Naive thymus-derived CD4-positive, alpha-beta T cell (primary cell): ENCODE measurements at regions of chr12 and their contacts with region 1.

Region 1: GRCh38 chr12:55926738-55927587 is 731 bp downstream of the PYM1 start:
- DNase-seq: peak; percentile 70 to 91 (median 87)
- ATAC-seq: peak; percentile 65
- H3K4me3 ChIP-seq: peak overlapping the region; percentile 99
- H3K4me3 Mint-ChIP-seq: peak overlapping the region; percentile 96 to 100 (median 98)
- H3K27ac ChIP-seq: peak overlapping the region; percentile 90
- H3K27ac Mint-ChIP-seq: peak overlapping the region; percentile 96 to 100 (median 97)
- H3K4me1 ChIP-seq: peaks cover 25 to 28% of the 10 kb centered on the region in 2 donors
- H3K4me1 Mint-ChIP-seq: peaks cover 33 to 61% (median 50%) of the 10 kb centered on the region in 7 donors
- H3K27me3 ChIP-seq: no peaks in the 10 kb centered on the region
- H3K27me3 Mint-ChIP-seq: peaks cover 0 to 2% (median 0%) of the 10 kb centered on the region in 5 donors

Region 2: DNA sequence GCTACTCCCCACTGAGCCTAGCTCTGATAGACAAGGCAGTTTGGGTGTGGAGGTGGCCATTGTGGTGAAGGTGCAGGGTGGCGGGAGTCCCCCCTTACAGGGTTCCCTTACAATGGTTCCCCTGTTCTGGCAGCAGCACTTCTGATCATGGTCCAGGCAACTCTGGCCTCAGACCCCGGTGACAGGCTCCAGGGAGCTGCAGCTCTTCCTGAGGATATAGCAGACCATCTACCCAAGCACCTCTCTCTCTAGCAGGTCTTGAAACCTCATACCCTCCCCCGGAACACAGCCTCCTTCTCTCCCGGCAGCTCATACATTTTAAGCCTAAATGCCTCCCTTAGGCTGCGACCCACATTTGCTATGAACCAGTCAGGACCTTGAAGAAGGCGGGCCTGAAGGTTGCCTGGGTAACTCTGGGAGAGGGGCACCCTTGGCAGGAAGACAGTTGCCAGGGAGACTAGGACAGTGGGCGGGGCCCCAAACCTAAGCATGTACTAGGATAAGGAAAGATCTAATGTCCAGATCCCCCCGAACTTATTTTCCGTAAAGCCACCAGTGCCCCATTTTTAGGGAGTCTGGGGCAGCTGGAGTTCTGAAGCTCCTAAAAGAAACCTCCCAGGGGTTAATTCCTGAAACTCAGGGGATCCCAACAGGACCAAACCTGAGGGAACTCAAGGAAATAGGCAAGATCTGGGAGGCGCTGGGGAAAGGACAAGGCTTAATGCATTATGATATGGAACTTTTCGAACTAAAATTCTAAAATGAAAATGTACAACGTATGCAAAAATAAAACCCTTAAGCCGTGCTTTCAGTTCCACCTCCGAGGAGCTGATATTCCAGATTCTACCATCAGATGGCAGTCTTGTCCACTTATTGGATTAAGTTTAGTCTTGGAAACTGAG is 188.6 kb before region 1 on chr12:
- CTCF ChIA-PET with region 1: interaction called, 6 read pairs
- POLR2A ChIA-PET with region 1: interaction called, 17 read pairs
- intact Hi-C with region 1: loop called (anchors 1 to 2 kb)
- DNase-seq: peak in 8 of 9 donors; percentile 69 to 88 (median 81)
- ATAC-seq: peak; percentile 79
- H3K4me3 ChIP-seq: peak overlapping the region; percentile 91
- H3K4me3 Mint-ChIP-seq: peak overlapping the region; percentile 74 to 94 (median 89)
- H3K27ac ChIP-seq: peak overlapping the region; percentile 76
- H3K27ac Mint-ChIP-seq: peak overlapping the region; percentile 86 to 96 (median 92)
- H3K4me1 ChIP-seq: peaks cover 15 to 18% of the 10 kb centered on the region in 2 donors
- H3K4me1 Mint-ChIP-seq: peaks cover 26 to 43% (median 29%) of the 10 kb centered on the region in 7 donors
- H3K27me3 ChIP-seq: no peaks in the 10 kb centered on the region
- H3K27me3 Mint-ChIP-seq: peaks cover 0 to 8% (median 0%) of the 10 kb centered on the region in 5 donors

Region 3: DNA sequence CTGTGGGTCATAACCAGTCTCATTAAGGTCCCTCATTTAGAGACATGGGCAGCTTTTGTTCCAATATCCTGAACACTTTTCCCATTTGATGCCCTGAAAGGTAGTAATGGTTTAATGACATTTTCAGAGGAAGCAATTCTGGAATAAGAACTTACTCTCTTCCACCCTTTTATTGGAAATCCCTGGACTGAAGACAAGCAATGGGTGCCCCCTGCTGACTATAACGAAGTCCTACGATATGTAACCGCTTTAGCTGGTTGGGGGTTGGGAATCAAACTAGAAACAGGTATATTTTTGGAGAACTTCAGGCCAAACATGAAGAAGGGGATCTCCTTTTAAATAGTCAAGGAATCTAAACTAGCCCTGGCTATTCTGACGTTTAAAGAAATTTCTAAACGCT is 129.9 kb before region 1 on chr12:
- CTCF ChIA-PET with region 1: no interaction called
- POLR2A ChIA-PET with region 1: no interaction called
- intact Hi-C with region 1: no loop called
- DNase-seq: peak in 4 of 9 donors; percentile 19 to 30 (median 26)
- ATAC-seq: peak; percentile 44
- H3K4me3 ChIP-seq: no peak overlapping the region
- H3K4me3 Mint-ChIP-seq: no peak overlapping the region
- H3K27ac ChIP-seq: no peak overlapping the region
- H3K27ac Mint-ChIP-seq: peak overlapping the region in 1 of 9 donors; percentile 23
- H3K4me1 ChIP-seq: no peaks in the 10 kb centered on the region
- H3K4me1 Mint-ChIP-seq: peaks cover 0 to 20% (median 11%) of the 10 kb centered on the region in 7 donors
- H3K27me3 ChIP-seq: no peaks in the 10 kb centered on the region
- H3K27me3 Mint-ChIP-seq: no peaks in the 10 kb centered on the region

Region 4: GRCh38 chr12:55940065-55940732 is 13.2 kb after region 1 on chr12:
- CTCF ChIA-PET with region 1: interaction called, 51 read pairs
- POLR2A ChIA-PET with region 1: interaction called, 728 read pairs
- intact Hi-C with region 1: loop called (anchors 1 kb)
- DNase-seq: peak; percentile 62 to 88 (median 82)
- ATAC-seq: peak; percentile 98
- H3K4me3 ChIP-seq: no peak overlapping the region
- H3K4me3 Mint-ChIP-seq: peak overlapping the region; percentile 57 to 99 (median 72)
- H3K27ac ChIP-seq: peak overlapping the region; percentile 64
- H3K27ac Mint-ChIP-seq: peak overlapping the region; percentile 55 to 100 (median 97)
- H3K4me1 ChIP-seq: peaks cover 16 to 63% of the 10 kb centered on the region in 2 donors
- H3K4me1 Mint-ChIP-seq: peaks cover 65 to 98% (median 93%) of the 10 kb centered on the region in 7 donors
- H3K27me3 ChIP-seq: no peaks in the 10 kb centered on the region
- H3K27me3 Mint-ChIP-seq: no peaks in the 10 kb centered on the region

Region 5: GRCh38 chr12:56020423-56021184 is 93.6 kb after region 1 on chr12 and contains the start of gene IKZF4:
- CTCF ChIA-PET with region 1: no interaction called
- POLR2A ChIA-PET with region 1: no interaction called
- intact Hi-C with region 1: loop called in 1 of 2 experiments (anchors 5 kb)
- DNase-seq: peak in 1 of 9 donors; percentile 36
- ATAC-seq: peak; percentile 55
- H3K4me3 ChIP-seq: peak within 1 kb of the TSS; percentile 41
- H3K4me3 Mint-ChIP-seq: peak within 1 kb of the TSS; percentile 80 to 97 (median 88)
- H3K27ac ChIP-seq: peak within 1 kb of the TSS; percentile 62
- H3K27ac Mint-ChIP-seq: peak within 1 kb of the TSS; percentile 73 to 97 (median 93)
- H3K4me1 ChIP-seq: peaks cover 0 to 16% of the 10 kb centered on the region in 2 donors
- H3K4me1 Mint-ChIP-seq: peaks cover 7 to 58% (median 24%) of the 10 kb centered on the region in 7 donors
- H3K27me3 ChIP-seq: no peaks in the 10 kb centered on the region
- H3K27me3 Mint-ChIP-seq: no peaks in the 10 kb centered on the region
- total RNA-seq, gene IKZF4: 3.6 to 37.8 (median 5.3) TPM

Region 6: GRCh38 chr12:56224102-56224701 is 297.2 kb after region 1 on chr12 and contains the start of gene NABP2:
- CTCF ChIA-PET with region 1: no interaction called
- POLR2A ChIA-PET with region 1: interaction called, 3 read pairs
- intact Hi-C with region 1: loop called (anchors 1 kb)
- DNase-seq: peak; percentile 78 to 97 (median 81)
- ATAC-seq: peak; percentile 85
- H3K4me3 ChIP-seq: peak within 1 kb of the TSS; percentile 82
- H3K4me3 Mint-ChIP-seq: peak within 1 kb of the TSS; percentile 77 to 99 (median 87)
- H3K27ac ChIP-seq: peak within 1 kb of the TSS; percentile 98
- H3K27ac Mint-ChIP-seq: peak within 1 kb of the TSS; percentile 78 to 100 (median 91)
- H3K4me1 ChIP-seq: peaks cover 22 to 27% of the 10 kb centered on the region in 2 donors
- H3K4me1 Mint-ChIP-seq: peaks cover 16 to 57% (median 46%) of the 10 kb centered on the region in 7 donors
- H3K27me3 ChIP-seq: no peaks in the 10 kb centered on the region
- H3K27me3 Mint-ChIP-seq: peaks cover 0 to 3% (median 0%) of the 10 kb centered on the region in 5 donors
- total RNA-seq, gene NABP2: 9.2 to 61.2 (median 11.8) TPM

Region 7: DNA sequence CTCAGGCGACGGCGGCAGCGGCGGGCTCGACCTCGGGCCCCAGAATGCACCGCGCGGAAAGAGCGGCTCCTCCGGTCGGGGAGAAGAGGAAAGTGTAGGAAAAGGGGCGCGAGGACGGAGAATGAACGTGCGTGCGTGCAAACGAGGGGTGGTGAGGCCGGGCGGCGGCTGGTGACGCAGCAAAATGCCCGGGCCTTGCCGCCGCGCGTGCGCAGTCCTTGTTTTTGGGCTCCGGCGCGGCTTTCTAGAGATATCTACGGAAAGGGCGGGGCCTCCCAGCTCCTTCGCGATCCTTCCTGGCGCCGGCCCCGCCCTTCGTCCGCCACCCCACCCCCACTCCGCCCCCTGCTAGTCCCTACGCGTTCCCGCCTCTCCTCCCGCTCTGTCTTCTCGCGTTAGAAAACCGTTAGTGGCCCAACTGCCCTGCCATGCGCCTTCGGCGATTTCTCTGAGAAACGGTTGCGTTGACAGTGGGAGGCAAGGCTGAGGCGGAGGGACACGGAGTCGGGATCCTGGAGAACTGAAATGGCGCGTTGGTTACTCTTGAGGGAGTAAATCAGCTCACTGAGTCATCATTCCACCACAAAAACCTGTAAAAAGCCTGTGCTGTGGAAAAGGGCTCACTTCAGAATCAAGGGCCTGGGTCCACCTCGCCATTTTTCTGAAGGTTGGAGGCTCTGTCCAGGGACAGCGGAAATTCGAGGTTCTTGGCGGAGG is 761.3 kb after region 1 on chr12 and contains the start of gene PTGES3:
- CTCF ChIA-PET with region 1: no interaction called
- POLR2A ChIA-PET with region 1: interaction called, 3 read pairs
- intact Hi-C with region 1: loop called in 1 of 2 experiments (anchors 1 kb)
- DNase-seq: peak; percentile 95 to 98 (median 98)
- ATAC-seq: peak; percentile 87
- H3K4me3 ChIP-seq: peak within 1 kb of the TSS; percentile 80
- H3K4me3 Mint-ChIP-seq: peak within 1 kb of the TSS; percentile 97 to 100 (median 100)
- H3K27ac ChIP-seq: peak within 1 kb of the TSS; percentile 98
- H3K27ac Mint-ChIP-seq: peak within 1 kb of the TSS; percentile 95 to 100 (median 99)
- H3K4me1 ChIP-seq: peaks cover 12 to 19% of the 10 kb centered on the region in 2 donors
- H3K4me1 Mint-ChIP-seq: peaks cover 20 to 41% (median 34%) of the 10 kb centered on the region in 7 donors
- H3K27me3 ChIP-seq: no peaks in the 10 kb centered on the region
- H3K27me3 Mint-ChIP-seq: no peaks in the 10 kb centered on the region
- total RNA-seq, gene PTGES3: 111 to 229 (median 153) TPM